ENCODE measurements at regions of chr19 and their contacts with region 1.

Region 1: GRCh38 chr19:33302175-33302973 is at the start of gene CEBPA:
- DNase-seq: peak; percentile 80
- ATAC-seq: peak; percentile 75
- H3K4me3 Mint-ChIP-seq: peak within 1 kb of the TSS; percentile 68
- H3K27ac Mint-ChIP-seq: no peak within 1 kb of the TSS
- H3K4me1 Mint-ChIP-seq: peaks cover 30% of the 10 kb centered on the region
- H3K27me3 Mint-ChIP-seq: peaks cover 41% of the 10 kb centered on the region
- CTCF ChIP-seq: no peak
- total RNA-seq, gene CEBPA: 5.6 to 6.6 TPM (median 5.8 TPM) in 3 replicates

Region 2: GRCh38 chr19:33199441-33200265 is 102.7 kb before region 1 on chr19:
- CTCF ChIA-PET with region 1: no interaction called
- POLR2A ChIA-PET with region 1: no interaction called
- DNase-seq: no peak
- ATAC-seq: no peak
- H3K4me3 Mint-ChIP-seq: no peak overlapping the region
- H3K27ac Mint-ChIP-seq: no peak overlapping the region
- H3K4me1 Mint-ChIP-seq: no peaks in the 10 kb centered on the region
- H3K27me3 Mint-ChIP-seq: no peaks in the 10 kb centered on the region; the same call in 1 of the 2 replicates
- CTCF ChIP-seq: no peak

Region 3: DNA sequence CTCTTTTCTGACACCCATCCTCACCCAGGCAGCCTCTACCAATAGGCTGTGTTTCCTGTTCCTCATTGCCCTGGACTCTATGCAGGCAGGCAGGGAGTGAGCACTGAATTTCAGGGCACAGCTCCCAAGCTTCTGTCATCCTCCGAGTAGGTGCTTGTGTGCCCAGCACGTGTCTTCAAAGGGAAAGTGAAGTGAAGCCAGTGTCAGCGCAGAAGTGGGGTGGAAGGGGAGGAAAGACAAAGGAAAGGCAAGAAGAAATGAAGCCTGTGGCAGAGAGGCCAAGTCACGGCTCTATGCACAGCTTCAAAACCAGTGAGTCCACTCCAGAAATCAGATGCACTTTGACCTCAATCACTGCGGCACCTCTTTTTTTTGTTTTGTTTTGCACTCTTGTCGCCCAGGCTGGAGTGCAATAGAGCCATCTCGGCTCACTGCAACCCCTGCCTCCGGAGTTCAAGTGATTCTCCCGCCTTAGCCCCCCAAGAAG is 16.9 kb before region 1 on chr19:
- CTCF ChIA-PET with region 1: no interaction called
- POLR2A ChIA-PET with region 1: no interaction called
- DNase-seq: no peak
- ATAC-seq: no peak
- H3K4me3 Mint-ChIP-seq: no peak overlapping the region
- H3K27ac Mint-ChIP-seq: no peak overlapping the region
- H3K4me1 Mint-ChIP-seq: peaks cover 16% of the 10 kb centered on the region
- H3K27me3 Mint-ChIP-seq: peaks cover 6% of the 10 kb centered on the region
- CTCF ChIP-seq: no peak

Region 4: GRCh38 chr19:33339016-33339984 is 36.9 kb after region 1 on chr19:
- CTCF ChIA-PET with region 1: no interaction called
- POLR2A ChIA-PET with region 1: no interaction called
- DNase-seq: no peak
- ATAC-seq: no peak
- H3K4me3 Mint-ChIP-seq: no peak overlapping the region
- H3K27ac Mint-ChIP-seq: no peak overlapping the region
- H3K4me1 Mint-ChIP-seq: 0 out of 2 replicates have a peak, but pooled peaks cover 2% of the 10 kb centered on the region
- H3K27me3 Mint-ChIP-seq: peaks cover 2% of the 10 kb centered on the region
- CTCF ChIP-seq: no peak

Region 5: DNA sequence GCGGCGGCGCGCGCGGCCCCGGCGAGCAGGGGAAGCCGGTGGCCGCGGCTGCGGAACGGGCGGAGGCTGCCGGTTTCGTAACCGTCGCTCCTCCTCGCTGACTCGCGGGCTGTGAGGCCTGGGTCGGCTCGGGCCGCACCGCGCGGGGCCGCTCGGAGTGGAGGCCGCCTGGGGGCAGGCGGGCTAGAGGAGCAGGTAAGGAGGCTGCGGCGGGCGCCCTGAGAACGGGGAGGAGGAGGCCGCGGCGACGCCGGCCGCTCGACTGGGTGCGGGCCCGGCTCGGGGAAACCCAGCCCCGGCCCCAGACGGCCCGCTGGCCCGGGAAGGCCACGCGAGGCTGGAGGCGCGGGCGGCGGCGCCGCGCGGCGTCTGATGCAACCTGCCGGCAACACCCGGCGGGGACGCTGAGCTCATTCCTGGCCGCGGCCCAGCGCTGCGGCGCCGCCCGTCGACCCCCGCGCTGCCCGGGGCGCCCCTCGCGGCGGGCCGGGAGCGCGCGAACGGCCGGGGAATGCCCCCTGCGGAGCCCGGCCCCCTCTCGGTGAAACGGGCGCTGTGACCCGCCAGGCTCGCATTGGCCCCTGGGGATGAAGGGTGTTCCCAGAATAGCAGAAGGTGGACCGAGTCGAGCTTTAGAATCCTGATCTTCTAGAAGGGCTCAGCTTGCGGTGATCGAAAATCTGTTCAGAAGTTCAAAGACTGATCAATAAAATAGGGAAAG is 71.5 kb after region 1 on chr19 and contains the start of gene CEBPG:
- CTCF ChIA-PET with region 1: interaction called, 9 read pairs
- POLR2A ChIA-PET with region 1: interaction called, 12 read pairs
- DNase-seq: peak; percentile 44
- ATAC-seq: peak; percentile 9
- H3K4me3 Mint-ChIP-seq: peak within 1 kb of the TSS; percentile 84
- H3K27ac Mint-ChIP-seq: peak within 1 kb of the TSS; percentile 81
- H3K4me1 Mint-ChIP-seq: peaks cover 45% of the 10 kb centered on the region
- H3K27me3 Mint-ChIP-seq: peaks cover 7% of the 10 kb centered on the region
- CTCF ChIP-seq: no peak
- total RNA-seq, gene CEBPG: 28.9 to 33.1 TPM (median 30.4 TPM) in 3 replicates

Region 6: DNA sequence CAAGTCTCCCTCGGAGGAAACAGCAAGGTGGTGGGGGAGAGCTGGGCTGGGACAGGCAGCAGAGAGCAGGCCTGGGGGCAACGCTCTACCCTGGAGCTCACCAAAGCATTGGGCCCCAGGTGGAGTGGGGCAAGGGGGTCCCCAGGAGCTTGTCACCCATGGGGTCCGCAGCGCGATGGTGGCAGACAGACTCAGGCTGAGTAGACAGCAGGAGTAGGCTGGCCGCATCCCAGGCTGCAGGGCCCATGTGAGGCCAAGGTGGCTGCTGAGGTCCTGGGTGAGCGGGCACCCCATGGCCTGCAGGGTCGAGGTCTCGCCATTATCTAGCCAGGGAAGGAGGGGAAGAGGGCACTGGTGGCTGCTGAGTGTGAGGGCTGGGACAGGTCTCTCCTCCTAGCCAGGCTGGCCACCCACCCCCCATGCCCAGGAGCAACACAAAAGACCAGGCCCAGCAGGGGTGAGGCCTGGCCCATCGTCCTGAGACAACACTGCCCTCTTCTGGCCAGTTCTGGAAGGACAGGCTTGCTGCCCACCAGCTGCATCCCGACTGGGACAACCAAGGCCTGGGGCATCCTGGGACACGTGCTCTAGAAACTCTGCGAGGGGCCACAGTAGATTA is 104.3 kb after region 1 on chr19:
- CTCF ChIA-PET with region 1: interaction called, 10 read pairs
- POLR2A ChIA-PET with region 1: no interaction called
- DNase-seq: peak; percentile 92
- ATAC-seq: peak; percentile 86
- H3K4me3 Mint-ChIP-seq: no peak overlapping the region
- H3K27ac Mint-ChIP-seq: peak overlapping the region; percentile 53; the same call in 1 of the 2 replicates
- H3K4me1 Mint-ChIP-seq: peaks cover 4% of the 10 kb centered on the region; the same call in 1 of the 2 replicates
- H3K27me3 Mint-ChIP-seq: no peaks in the 10 kb centered on the region
- CTCF ChIP-seq: peak; percentile 98